Activated naive CD4-positive, alpha-beta T cell treated with anti-CD3 and anti-CD28 coated beads for 36 hours (primary cell): ENCODE measurements at regions of chr10 and their contacts with region 1.

Region 1: DNA sequence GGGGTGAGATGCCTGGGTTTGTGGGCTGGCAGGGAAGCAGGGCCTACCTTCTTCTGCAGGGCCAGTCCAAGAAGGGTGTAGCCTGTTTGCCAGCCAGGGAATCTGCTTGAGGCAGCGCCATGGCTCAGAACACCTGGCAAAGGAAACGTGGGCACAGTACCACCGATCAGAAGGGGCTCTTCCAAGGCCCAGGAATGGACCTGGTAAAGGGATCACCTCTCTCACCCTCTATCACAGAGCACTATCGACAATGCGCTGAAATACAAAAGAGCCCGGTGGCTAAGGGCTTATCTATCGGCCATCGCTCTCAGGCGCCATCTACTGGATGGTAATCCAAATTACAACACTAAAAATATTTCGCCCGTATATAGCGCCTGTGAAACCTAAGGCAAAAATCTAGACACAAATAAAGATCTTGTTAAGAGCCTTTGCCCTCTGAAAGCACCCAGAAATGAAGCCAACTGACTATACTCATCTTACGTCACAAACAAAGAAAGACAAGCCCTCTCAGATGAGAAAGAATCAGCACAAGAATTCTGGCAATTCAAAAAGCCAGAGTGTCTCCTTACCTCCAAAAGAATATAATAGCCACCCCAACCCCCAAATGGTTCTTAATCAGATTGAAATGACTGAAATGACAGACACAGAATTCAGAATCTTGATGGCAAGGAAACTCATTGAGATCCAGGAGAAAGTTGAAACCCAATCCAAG is 217.8 kb upstream of the HPS1 start:
- DNase-seq: peak; percentile 38
- H3K4me3 Mint-ChIP-seq: no peak overlapping the region
- H3K27ac Mint-ChIP-seq: no peak overlapping the region
- H3K4me1 Mint-ChIP-seq: no peaks in the 10 kb centered on the region
- H3K27me3 Mint-ChIP-seq: peaks cover 20% of the 10 kb centered on the region

Region 2: GRCh38 chr10:97914837-97915211 is 749.7 kb before region 1 on chr10:
- CTCF ChIA-PET with region 1: interaction called, 3 read pairs
- intact Hi-C with region 1: loop called (anchors 10 kb)
- DNase-seq: peak; percentile 87
- H3K4me3 Mint-ChIP-seq: no peak overlapping the region
- H3K27ac Mint-ChIP-seq: no peak overlapping the region
- H3K4me1 Mint-ChIP-seq: peaks cover 3% of the 10 kb centered on the region
- H3K27me3 Mint-ChIP-seq: no peaks in the 10 kb centered on the region

Region 3: DNA sequence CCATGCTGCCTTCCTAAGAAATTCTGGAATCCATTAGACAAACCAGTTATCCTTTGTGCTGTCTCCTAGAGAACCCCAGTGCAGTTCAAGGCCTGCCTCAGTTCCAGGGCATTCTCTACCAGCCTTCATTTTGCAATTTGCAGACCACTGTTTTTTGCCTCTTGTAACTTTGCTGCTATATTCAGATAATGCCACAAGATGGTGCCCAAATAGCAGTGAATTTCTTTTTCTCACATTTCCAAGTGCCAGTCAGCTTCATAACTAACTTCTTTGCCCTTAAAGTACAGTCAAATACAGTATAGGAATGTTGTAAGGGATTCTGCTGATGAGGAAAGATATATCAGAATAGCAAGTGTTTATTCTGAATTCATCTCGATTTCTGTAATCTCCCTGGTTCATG is 421.7 kb before region 1 on chr10:
- CTCF ChIA-PET with region 1: no interaction called
- intact Hi-C with region 1: loop called (anchors 10 kb)
- DNase-seq: no peak
- H3K4me3 Mint-ChIP-seq: no peak overlapping the region
- H3K27ac Mint-ChIP-seq: no peak overlapping the region
- H3K4me1 Mint-ChIP-seq: no peaks in the 10 kb centered on the region
- H3K27me3 Mint-ChIP-seq: no peaks in the 10 kb centered on the region

Region 4: GRCh38 chr10:98425511-98426352 is 238.8 kb before region 1 on chr10:
- CTCF ChIA-PET with region 1: no interaction called
- intact Hi-C with region 1: loop called (anchors 2 kb)
- DNase-seq: peak; percentile 63
- H3K4me3 Mint-ChIP-seq: no peak overlapping the region
- H3K27ac Mint-ChIP-seq: no peak overlapping the region
- H3K4me1 Mint-ChIP-seq: no peaks in the 10 kb centered on the region
- H3K27me3 Mint-ChIP-seq: no peaks in the 10 kb centered on the region

Region 5: DNA sequence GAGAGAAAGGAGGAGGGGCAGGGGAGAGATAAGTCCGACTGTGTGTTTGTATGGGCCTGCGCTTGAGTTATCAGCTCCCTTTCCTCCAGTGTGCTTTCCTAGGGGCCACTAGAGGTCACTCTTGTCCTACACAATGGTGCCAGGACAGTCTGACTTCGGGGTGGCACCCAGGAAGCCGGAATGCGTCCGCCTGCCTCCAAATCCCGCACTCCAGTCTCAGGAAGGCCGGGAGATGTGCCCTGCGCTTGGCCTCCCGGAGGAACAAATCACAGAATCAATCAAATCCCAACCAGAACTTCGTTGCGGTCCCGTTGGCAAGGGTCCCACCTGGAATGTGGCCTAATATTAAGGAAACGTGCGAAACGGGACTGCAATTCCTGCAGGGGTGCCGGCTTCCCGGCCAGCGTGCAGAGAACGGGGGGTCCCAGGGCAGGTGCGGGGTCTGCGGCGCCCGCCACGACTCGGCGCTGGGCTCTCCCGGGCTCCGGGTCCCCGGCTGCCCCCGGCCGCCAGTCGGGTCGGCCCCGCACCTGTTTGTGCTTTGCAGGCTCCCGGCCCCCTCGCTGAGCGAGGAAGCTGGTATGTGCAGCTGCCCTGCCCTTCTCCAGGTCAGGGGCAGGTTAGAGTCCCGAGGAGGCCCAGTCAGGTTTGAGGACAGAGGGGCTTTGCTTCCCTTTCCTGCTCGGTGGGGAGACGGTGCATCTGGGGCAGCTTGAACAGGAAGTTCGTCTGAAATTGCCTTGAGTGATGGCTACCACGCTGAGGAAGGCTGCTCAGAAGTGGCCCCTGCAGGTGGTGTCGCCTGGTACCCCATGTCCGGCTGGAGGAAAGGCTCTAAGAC is 196.8 kb before region 1 on chr10:
- CTCF ChIA-PET with region 1: interaction called, 10 read pairs
- intact Hi-C with region 1: loop called (anchors 1 kb)
- DNase-seq: peak; percentile 75
- H3K4me3 Mint-ChIP-seq: peak overlapping the region; percentile 79
- H3K27ac Mint-ChIP-seq: peak overlapping the region; percentile 57
- H3K4me1 Mint-ChIP-seq: peaks cover 6% of the 10 kb centered on the region
- H3K27me3 Mint-ChIP-seq: peaks cover 9% of the 10 kb centered on the region

Region 6: GRCh38 chr10:98696516-98696915 is 32.0 kb after region 1 on chr10:
- CTCF ChIA-PET with region 1: no interaction called
- intact Hi-C with region 1: no loop called
- DNase-seq: no peak
- H3K4me3 Mint-ChIP-seq: no peak overlapping the region
- H3K27ac Mint-ChIP-seq: no peak overlapping the region
- H3K4me1 Mint-ChIP-seq: no peaks in the 10 kb centered on the region
- H3K27me3 Mint-ChIP-seq: peaks cover 10% of the 10 kb centered on the region

Region 7: GRCh38 chr10:99248824-99249223 is 584.3 kb after region 1 on chr10:
- CTCF ChIA-PET with region 1: no interaction called
- intact Hi-C with region 1: loop called (anchors 10 kb)
- DNase-seq: no peak
- H3K4me3 Mint-ChIP-seq: no peak overlapping the region
- H3K27ac Mint-ChIP-seq: no peak overlapping the region
- H3K4me1 Mint-ChIP-seq: no peaks in the 10 kb centered on the region
- H3K27me3 Mint-ChIP-seq: peaks cover 31% of the 10 kb centered on the region